ENCODE measurements at regions of chr10 and their contacts with region 1.

Region 1: DNA sequence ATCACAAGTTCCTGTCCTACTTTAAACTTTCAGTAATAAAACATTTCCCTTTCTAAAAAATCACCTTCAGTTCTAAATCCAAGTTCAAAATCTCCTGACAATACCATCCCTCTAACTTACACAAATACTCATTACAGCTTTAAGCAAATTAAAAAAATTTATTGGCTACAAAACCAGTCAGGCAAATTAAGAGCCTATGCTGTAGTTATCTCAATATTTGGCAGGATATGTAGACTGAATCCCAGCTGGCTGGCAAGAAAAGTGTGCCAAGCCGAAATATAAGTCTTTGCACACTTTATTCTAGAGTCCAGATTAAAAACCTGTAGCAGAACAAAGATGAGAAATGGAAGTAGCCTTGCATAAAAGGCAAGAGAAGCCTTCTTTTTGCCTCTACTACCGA is 9.5 kb downstream of the WAPL start:
- DNase-seq: no peak
- ATAC-seq: no peak
- H3K4me3 ChIP-seq: no peak overlapping the region
- H3K4me3 Mint-ChIP-seq: no peak overlapping the region
- H3K27ac ChIP-seq: no peak overlapping the region
- H3K27ac Mint-ChIP-seq: peak overlapping the region; percentile 1
- H3K4me1 ChIP-seq: peaks cover 48% of the 10 kb centered on the region
- H3K4me1 Mint-ChIP-seq: peaks cover 53% of the 10 kb centered on the region
- H3K27me3 ChIP-seq: no peaks in the 10 kb centered on the region
- H3K27me3 Mint-ChIP-seq: no peaks in the 10 kb centered on the region
- CTCF ChIP-seq: no peak

Region 2: GRCh38 chr10:86451604-86451960 is 60.6 kb before region 1 on chr10:
- CTCF ChIA-PET with region 1: no interaction called
- POLR2A ChIA-PET with region 1: no interaction called
- intact Hi-C with region 1: loop called in 1 of 2 experiments (anchors 10 kb)
- DNase-seq: no peak
- ATAC-seq: no peak
- H3K4me3 ChIP-seq: no peak overlapping the region
- H3K4me3 Mint-ChIP-seq: no peak overlapping the region
- H3K27ac ChIP-seq: no peak overlapping the region
- H3K27ac Mint-ChIP-seq: no peak overlapping the region
- H3K4me1 ChIP-seq: peaks cover 21% of the 10 kb centered on the region
- H3K4me1 Mint-ChIP-seq: peaks cover 33% of the 10 kb centered on the region
- H3K27me3 ChIP-seq: no peaks in the 10 kb centered on the region
- H3K27me3 Mint-ChIP-seq: no peaks in the 10 kb centered on the region
- CTCF ChIP-seq: no peak

Region 3: GRCh38 chr10:86535057-86535882 is 23.1 kb after region 1 on chr10:
- CTCF ChIA-PET with region 1: no interaction called
- POLR2A ChIA-PET with region 1: no interaction called
- intact Hi-C with region 1: no loop called
- DNase-seq: peak in 5 of 9 experiments; percentile 13 to 58 (median 37)
- ATAC-seq: no peak
- H3K4me3 ChIP-seq: peak overlapping the region in 1 of 2 experiments; percentile 32
- H3K4me3 Mint-ChIP-seq: peak overlapping the region; percentile 62
- H3K27ac ChIP-seq: no peak overlapping the region
- H3K27ac Mint-ChIP-seq: peak overlapping the region; percentile 64
- H3K4me1 ChIP-seq: peaks cover 22% of the 10 kb centered on the region
- H3K4me1 Mint-ChIP-seq: peaks cover 33% of the 10 kb centered on the region
- H3K27me3 ChIP-seq: no peaks in the 10 kb centered on the region
- H3K27me3 Mint-ChIP-seq: no peaks in the 10 kb centered on the region
- CTCF ChIP-seq: no peak